GM12878 (cell line): ENCODE measurements at regions of chr1 and their contacts with region 1.

Region 1: DNA sequence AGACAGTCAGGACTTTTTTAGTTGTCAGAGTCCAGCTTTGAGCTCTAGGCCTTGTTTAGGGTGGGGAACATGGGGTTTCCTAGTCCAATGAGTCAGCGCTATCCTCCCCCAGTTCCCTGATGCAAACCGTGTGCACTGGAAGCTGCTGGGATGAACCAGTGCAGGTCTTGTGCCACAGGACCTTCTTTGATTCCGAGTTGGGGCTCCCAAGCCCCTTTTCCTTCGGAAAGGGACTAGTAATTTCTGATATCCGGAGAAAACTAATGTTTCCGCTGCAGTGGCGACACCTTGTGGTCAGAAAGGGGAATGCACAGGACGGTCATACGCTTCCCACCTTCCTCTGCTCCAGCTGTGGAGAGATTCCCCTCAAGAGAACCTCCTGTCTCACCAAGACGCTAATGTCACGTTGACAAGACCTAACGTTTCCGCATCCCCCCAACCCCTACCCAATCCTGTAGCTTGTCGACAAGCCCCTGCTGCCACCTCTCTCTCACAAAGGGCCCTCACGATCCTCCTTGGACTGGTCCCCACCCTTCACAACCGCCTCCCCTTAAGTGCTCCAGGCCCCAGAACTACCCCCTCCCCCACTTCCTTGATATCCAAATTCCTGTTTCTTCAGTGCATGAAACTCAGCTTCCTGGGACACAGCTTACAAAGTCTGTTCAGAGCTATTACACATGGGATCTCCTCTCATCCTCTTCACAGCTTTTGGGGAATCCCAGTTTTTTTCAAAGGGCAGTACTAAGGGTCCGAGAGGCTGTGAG is 30.9 kb downstream of the GPA33 start:
- DNase-seq: no peak
- ATAC-seq: peak; percentile 75
- H3K4me3 ChIP-seq: no peak overlapping the region
- H3K27ac ChIP-seq: no peak overlapping the region
- H3K4me1 ChIP-seq: 0 out of 2 replicates have a peak, but pooled peaks cover 3% of the 10 kb centered on the region
- H3K27me3 ChIP-seq: no peaks in the 10 kb centered on the region
- CTCF ChIP-seq: peak; percentile 87 to 90 (median 88)
- EP300 ChIP-seq: no peak
- POLR2A ChIP-seq: no peak
- RAD21 ChIP-seq: peak; percentile 85

Region 2: GRCh38 chr1:166785987-166786386 is 273.2 kb before region 1 on chr1:
- CTCF ChIA-PET with region 1: interaction called, 11 read pairs
- POLR2A ChIA-PET with region 1: no interaction called
- RAD21 ChIA-PET with region 1: no interaction called
- SMC1A ChIA-PET with region 1: interaction called, 3 read pairs
- in situ Hi-C with region 1: no loop called
- intact Hi-C with region 1: no loop called
- DNase-seq: no peak
- ATAC-seq: no peak
- H3K4me3 ChIP-seq: no peak overlapping the region
- H3K27ac ChIP-seq: no peak overlapping the region
- H3K4me1 ChIP-seq: no peaks in the 10 kb centered on the region
- H3K27me3 ChIP-seq: no peaks in the 10 kb centered on the region
- CTCF ChIP-seq: no peak; a peak in 1 of 6 replicates
- EP300 ChIP-seq: no peak
- POLR2A ChIP-seq: no peak
- RAD21 ChIP-seq: no peak

Region 3: GRCh38 chr1:166920561-166921475 is 138.4 kb before region 1 on chr1:
- CTCF ChIA-PET with region 1: interaction called, 734 read pairs
- POLR2A ChIA-PET with region 1: interaction called, 4 read pairs
- RAD21 ChIA-PET with region 1: interaction called, 8 read pairs
- SMC1A ChIA-PET with region 1: interaction called, 384 read pairs
- in situ Hi-C with region 1: loop called (anchors 5 kb)
- intact Hi-C with region 1: no loop called
- DNase-seq: no peak
- ATAC-seq: peak; percentile 49; the same call in 2 of the 3 replicates
- H3K4me3 ChIP-seq: no peak overlapping the region
- H3K27ac ChIP-seq: no peak overlapping the region
- H3K4me1 ChIP-seq: peaks cover 6% of the 10 kb centered on the region; the same call in 1 of the 2 replicates
- H3K27me3 ChIP-seq: peaks cover 0 to 3% of the 10 kb centered on the region in 2 experiments; a peak in 2 of 4 replicates
- CTCF ChIP-seq: no peak
- EP300 ChIP-seq: no peak
- POLR2A ChIP-seq: no peak
- RAD21 ChIP-seq: no peak

Region 4: DNA sequence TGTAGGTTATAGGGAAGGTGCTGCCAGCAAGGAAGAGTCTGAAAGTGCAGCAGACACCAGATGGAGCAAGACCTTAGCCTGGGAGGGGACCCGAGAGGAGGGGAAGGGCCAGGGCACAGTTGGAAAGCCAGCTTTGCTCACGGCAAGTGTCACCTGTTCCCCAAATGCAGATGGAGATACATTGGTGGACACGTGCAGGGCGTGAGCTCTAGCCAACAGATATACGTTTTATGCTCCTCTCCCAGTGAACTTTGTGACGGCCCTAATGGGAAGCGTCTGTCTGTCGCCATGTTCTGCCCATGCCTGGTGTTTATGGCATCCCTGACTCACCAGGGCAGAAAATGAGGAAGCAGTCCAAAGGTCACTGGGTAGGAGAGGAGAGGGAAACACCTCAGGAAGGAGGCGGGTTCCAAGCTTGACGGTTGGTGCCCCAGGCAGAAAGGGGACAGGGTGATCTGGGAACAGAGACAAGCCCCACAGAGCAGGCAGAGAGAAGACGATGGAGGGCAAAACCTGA is 23.3 kb after region 1 on chr1:
- CTCF ChIA-PET with region 1: interaction called, 12 read pairs
- POLR2A ChIA-PET with region 1: no interaction called
- RAD21 ChIA-PET with region 1: interaction called, 4 read pairs
- SMC1A ChIA-PET with region 1: interaction called, 6 read pairs
- in situ Hi-C with region 1: no loop called
- intact Hi-C with region 1: no loop called
- DNase-seq: no peak
- ATAC-seq: no peak
- H3K4me3 ChIP-seq: no peak overlapping the region
- H3K27ac ChIP-seq: no peak overlapping the region
- H3K4me1 ChIP-seq: no peaks in the 10 kb centered on the region
- H3K27me3 ChIP-seq: no peaks in the 10 kb centered on the region
- CTCF ChIP-seq: no peak
- EP300 ChIP-seq: no peak
- POLR2A ChIP-seq: no peak
- RAD21 ChIP-seq: no peak

Region 5: GRCh38 chr1:167427848-167428247 is 368.6 kb after region 1 on chr1:
- CTCF ChIA-PET with region 1: interaction called, 13 read pairs
- POLR2A ChIA-PET with region 1: no interaction called
- RAD21 ChIA-PET with region 1: interaction called, 4 read pairs
- SMC1A ChIA-PET with region 1: no interaction called
- in situ Hi-C with region 1: no loop called
- intact Hi-C with region 1: no loop called
- DNase-seq: no peak
- ATAC-seq: no peak
- H3K4me3 ChIP-seq: no peak overlapping the region
- H3K27ac ChIP-seq: no peak overlapping the region
- H3K4me1 ChIP-seq: peaks cover 27% of the 10 kb centered on the region
- H3K27me3 ChIP-seq: no peaks in the 10 kb centered on the region
- CTCF ChIP-seq: no peak
- EP300 ChIP-seq: no peak
- POLR2A ChIP-seq: no peak
- RAD21 ChIP-seq: no peak